Activated naive CD4-positive, alpha-beta T cell treated with anti-CD3 and anti-CD28 coated beads for 36 hours (primary cell): ENCODE measurements at regions of chrX and their contacts with region 1.

Region 1: DNA sequence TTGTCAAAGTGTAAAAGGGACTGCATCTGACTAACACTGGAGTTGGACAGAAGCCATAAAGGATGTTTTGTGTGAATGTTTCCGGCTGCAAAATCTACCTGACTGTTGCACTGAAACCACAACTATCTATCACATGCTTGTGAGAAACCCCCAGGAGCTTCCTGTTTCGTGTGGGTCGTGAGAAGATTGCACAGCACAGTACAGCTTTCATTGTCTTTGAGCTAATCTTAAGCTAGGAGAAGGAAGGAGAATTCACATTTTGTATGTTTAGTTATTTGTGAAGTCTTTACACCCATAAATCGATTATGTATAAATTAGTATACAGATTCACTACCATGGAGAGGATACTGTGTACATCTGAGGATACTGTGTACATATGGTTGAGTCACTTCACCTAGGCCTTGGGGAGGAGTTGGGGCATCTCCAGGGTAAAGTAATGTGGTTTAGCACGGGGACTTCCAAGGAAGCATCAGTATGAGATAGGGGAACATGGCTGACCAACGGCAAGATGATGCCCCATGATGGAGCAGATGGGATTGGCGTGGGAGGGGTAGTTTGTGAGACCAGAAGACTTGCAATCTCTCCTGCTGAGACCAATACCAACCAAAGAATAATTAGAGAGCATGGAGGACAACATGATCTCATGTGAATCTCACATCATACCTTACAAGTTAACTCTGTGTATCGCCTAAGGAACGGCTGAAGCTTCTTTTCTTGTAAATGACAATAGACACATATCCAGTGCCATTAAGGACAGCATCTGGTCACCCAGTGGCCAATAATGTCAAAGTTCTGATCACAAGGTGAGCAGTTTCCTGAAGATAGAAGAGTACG is 43.1 kb upstream of the FAM9C start:
- DNase-seq: peak; percentile 74
- H3K4me3 Mint-ChIP-seq: peak overlapping the region; percentile 79
- H3K27ac Mint-ChIP-seq: peak overlapping the region; percentile 97
- H3K4me1 Mint-ChIP-seq: peaks cover 87% of the 10 kb centered on the region
- H3K27me3 Mint-ChIP-seq: no peaks in the 10 kb centered on the region

Region 2: DNA sequence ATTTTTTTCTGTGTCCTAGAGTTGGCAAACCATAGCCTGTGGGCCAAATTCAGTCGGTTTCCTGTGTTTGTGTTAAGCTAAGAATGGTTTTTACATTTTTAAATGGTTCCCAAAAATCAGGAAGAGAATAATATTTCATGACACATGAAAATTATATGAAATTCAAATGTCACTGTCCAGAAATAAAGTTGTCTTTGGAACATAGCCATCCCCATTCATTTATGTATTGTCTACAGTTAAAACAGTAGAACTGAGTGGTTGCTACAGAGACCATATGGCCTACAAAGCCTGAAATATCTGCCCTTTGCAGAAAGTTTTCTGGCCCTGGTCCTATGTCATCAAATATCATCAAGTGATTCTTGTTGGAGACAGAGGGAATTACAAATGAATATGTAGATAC is 933.8 kb before region 1 on chrX:
- CTCF ChIA-PET with region 1: no interaction called
- intact Hi-C with region 1: no loop called
- DNase-seq: no peak
- H3K4me3 Mint-ChIP-seq: no peak overlapping the region
- H3K27ac Mint-ChIP-seq: no peak overlapping the region
- H3K4me1 Mint-ChIP-seq: no peaks in the 10 kb centered on the region
- H3K27me3 Mint-ChIP-seq: no peaks in the 10 kb centered on the region

Region 3: DNA sequence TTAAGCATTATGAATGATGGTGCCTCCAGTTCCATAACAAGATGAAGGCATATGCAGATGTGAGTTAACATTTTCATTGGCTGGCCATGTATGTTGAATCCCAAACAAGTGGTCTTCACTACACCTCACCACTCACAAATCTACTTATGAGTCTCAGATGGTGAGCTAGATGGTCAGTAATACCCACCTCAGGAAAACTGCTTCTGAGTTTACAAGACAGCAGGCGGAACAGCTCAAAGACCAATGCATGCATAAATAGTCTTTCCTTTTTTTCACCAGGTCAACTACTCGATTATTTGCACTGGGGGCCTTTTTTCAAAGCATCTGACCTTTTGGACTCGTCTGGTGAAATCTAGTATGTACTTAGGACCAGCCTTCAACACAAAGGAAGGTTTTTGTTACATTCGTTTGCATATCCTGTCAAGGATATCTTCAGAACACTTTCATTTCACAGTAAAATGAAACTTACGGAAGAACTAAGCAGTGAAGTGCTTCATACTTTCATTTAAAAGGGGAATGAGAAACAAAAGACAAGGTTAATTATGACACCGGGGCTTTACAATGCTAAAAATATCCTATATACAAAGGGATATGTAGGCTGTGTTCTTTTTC is 243.8 kb before region 1 on chrX:
- CTCF ChIA-PET with region 1: no interaction called
- intact Hi-C with region 1: loop called (anchors 5 kb)
- DNase-seq: no peak
- H3K4me3 Mint-ChIP-seq: peak overlapping the region; percentile 65
- H3K27ac Mint-ChIP-seq: peak overlapping the region; percentile 93
- H3K4me1 Mint-ChIP-seq: peaks cover 17% of the 10 kb centered on the region
- H3K27me3 Mint-ChIP-seq: no peaks in the 10 kb centered on the region

Region 4: GRCh38 chrX:12890467-12890866 is 197.1 kb before region 1 on chrX:
- CTCF ChIA-PET with region 1: no interaction called
- intact Hi-C with region 1: no loop called
- DNase-seq: no peak
- H3K4me3 Mint-ChIP-seq: peak overlapping the region; percentile 6
- H3K27ac Mint-ChIP-seq: peak overlapping the region; percentile 46
- H3K4me1 Mint-ChIP-seq: peaks cover 27% of the 10 kb centered on the region
- H3K27me3 Mint-ChIP-seq: no peaks in the 10 kb centered on the region

Region 5: GRCh38 chrX:13029831-13030771 is 57.4 kb before region 1 on chrX:
- CTCF ChIA-PET with region 1: no interaction called
- intact Hi-C with region 1: loop called (anchors 1 kb)
- DNase-seq: no peak
- H3K4me3 Mint-ChIP-seq: peak overlapping the region; percentile 52
- H3K27ac Mint-ChIP-seq: peak overlapping the region; percentile 77
- H3K4me1 Mint-ChIP-seq: peaks cover 65% of the 10 kb centered on the region
- H3K27me3 Mint-ChIP-seq: no peaks in the 10 kb centered on the region

Region 6: GRCh38 chrX:13167481-13168231 is 80.1 kb after region 1 on chrX:
- CTCF ChIA-PET with region 1: interaction called, 4 read pairs
- intact Hi-C with region 1: loop called (anchors 2 kb)
- DNase-seq: peak; percentile 37
- H3K4me3 Mint-ChIP-seq: peak overlapping the region; percentile 45
- H3K27ac Mint-ChIP-seq: peak overlapping the region; percentile 82
- H3K4me1 Mint-ChIP-seq: peaks cover 18% of the 10 kb centered on the region
- H3K27me3 Mint-ChIP-seq: no peaks in the 10 kb centered on the region

Region 7: DNA sequence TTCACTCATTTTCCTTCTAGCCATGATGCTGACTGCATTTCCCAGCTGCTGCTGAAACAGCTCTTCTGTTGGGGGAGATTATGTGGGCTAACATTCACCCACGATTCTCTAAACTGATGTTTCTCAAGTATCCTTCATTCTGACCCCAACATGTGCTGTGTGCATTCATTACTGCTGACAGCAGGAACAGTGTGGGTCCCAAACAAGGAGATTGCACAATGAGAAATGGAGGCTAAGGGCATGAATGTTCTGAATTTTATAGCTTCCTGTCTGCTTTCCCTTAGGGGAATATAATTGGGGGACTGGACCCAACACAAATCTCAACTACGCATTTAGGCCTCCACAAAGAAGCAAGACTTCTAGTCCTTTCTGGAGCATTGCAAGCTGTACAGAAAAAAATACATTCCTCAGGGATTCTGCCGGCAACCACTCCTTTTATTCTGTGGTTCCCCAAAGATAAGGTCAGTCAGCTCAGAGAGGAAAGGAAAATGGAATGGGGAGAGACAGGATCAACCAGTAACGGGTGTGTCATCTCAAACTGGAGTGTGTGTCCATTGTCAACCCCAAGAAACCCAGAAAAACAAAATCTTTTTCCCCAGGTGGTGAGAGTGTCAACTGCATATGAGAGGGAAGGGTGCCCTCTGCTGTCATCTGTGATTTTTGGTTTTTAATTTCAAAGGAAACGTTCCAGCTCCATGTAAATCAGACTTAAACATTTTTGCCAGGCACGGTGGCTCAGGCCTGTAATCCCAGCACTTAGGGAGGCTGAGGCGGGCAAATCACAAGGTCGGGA is 400.4 kb after region 1 on chrX:
- CTCF ChIA-PET with region 1: interaction called, 37 read pairs
- intact Hi-C with region 1: loop called (anchors 1 kb)
- DNase-seq: peak; percentile 58
- H3K4me3 Mint-ChIP-seq: no peak overlapping the region
- H3K27ac Mint-ChIP-seq: peak overlapping the region; percentile 68
- H3K4me1 Mint-ChIP-seq: peaks cover 16% of the 10 kb centered on the region
- H3K27me3 Mint-ChIP-seq: no peaks in the 10 kb centered on the region

Region 8: DNA sequence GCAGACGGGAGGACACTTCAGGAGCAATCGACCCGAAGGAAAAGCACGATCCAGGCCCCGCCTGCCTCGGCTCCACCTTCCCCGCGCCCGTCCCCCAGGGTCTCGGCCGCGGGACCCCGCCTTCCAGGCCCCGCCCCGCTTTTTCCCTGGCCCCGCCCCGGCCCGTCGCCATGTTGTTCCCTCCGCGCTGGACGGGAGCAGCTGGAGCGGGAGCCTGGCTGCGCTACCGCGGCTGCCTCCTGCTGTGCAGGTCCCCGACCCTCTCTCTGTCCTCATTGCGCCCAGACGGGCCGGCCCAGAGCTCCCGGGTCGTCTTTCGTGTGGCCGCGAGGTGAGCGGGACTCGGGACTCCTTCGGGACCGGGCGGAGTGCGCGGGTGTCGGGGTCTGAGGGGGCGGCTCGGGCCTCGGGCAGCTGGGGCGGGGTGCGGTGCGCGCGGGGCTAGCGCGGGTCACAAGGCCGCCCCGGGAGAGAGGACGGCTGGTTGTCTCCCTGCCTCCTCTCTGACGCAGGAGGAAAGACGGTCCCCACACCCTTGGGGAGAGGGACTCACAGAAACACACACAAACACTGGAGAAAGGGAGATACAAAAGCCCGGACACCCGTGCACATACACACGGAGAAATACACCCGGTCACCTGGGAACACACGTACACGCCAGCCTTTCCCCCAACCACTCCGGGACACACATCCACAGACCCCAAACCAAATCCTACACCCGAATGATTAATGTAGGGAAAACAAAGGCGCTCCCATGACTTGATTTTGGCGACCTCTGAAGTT is 601.6 kb after region 1 on chrX and contains the start of gene RAB9A:
- CTCF ChIA-PET with region 1: no interaction called
- intact Hi-C with region 1: loop called (anchors 5 kb)
- DNase-seq: peak; percentile 83
- H3K4me3 Mint-ChIP-seq: peak within 1 kb of the TSS; percentile 82
- H3K27ac Mint-ChIP-seq: peak within 1 kb of the TSS; percentile 96
- H3K4me1 Mint-ChIP-seq: peaks cover 65% of the 10 kb centered on the region
- H3K27me3 Mint-ChIP-seq: no peaks in the 10 kb centered on the region
- total RNA-seq, gene RAB9A: 22.8 to 23.3 TPM